ENCODE measurements at regions of chrX and their contacts with region 1.

Region 1: GRCh38 chrX:13087322-13088155 is 43.1 kb upstream of the FAM9C start:
- DNase-seq: peak; percentile 77
- ATAC-seq: peak; percentile 57
- H3K4me3 Mint-ChIP-seq: peak overlapping the region; percentile 80
- H3K27ac Mint-ChIP-seq: peak overlapping the region; percentile 96
- H3K4me1 Mint-ChIP-seq: peaks cover 76% of the 10 kb centered on the region
- H3K27me3 Mint-ChIP-seq: no peaks in the 10 kb centered on the region
- CTCF ChIP-seq: no peak

Region 2: DNA sequence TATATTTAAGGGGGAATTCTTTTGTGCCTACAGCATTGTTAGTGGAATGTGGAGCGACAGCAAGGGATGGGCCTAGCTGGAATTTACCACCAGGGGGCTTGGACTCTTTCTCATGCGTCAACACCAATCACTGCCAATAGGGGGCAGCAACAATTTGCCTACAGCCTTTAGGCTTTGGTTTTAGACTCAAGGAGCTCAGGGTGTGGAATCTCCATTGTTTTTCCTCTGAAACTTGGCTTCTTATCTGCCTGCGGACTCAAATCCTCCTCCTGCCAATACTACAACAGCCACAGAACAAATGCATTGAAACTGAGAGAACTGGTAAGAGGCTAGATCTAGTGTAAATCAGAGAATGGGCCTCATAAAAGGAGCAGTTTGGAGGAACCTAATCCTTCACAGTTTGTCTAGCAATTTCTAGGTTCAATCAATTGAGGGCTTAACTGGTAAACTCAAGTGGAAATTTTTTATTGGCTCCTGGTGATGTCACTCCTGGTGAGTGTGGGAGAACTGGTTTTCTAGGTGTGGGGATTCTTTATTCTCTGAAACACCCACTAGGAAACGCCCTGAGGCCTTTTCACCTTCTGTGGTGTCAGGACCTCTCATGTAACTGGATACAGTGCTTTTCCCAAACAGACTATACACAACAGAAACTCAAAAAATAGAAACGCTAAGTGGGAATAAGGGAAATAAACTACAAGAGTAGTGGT is 140.5 kb before region 1 on chrX:
- CTCF ChIA-PET with region 1: interaction called, 47 read pairs
- POLR2A ChIA-PET with region 1: interaction called, 12 read pairs
- intact Hi-C with region 1: loop called (anchors 2 kb)
- DNase-seq: peak; percentile 83
- ATAC-seq: peak; percentile 19
- H3K4me3 Mint-ChIP-seq: peak overlapping the region; percentile 65
- H3K27ac Mint-ChIP-seq: peak overlapping the region; percentile 95
- H3K4me1 Mint-ChIP-seq: peaks cover 47% of the 10 kb centered on the region
- H3K27me3 Mint-ChIP-seq: no peaks in the 10 kb centered on the region
- CTCF ChIP-seq: peak; percentile 87

Region 3: GRCh38 chrX:12974796-12975669 is 112.5 kb before region 1 on chrX and contains the start of gene TMSB4X:
- CTCF ChIA-PET with region 1: interaction called, 15 read pairs
- POLR2A ChIA-PET with region 1: interaction called, 333 read pairs
- intact Hi-C with region 1: loop called (anchors 2 kb)
- DNase-seq: peak; percentile 87
- ATAC-seq: peak; percentile 48
- H3K4me3 Mint-ChIP-seq: peak within 1 kb of the TSS; percentile 91
- H3K27ac Mint-ChIP-seq: peak within 1 kb of the TSS; percentile 95
- H3K4me1 Mint-ChIP-seq: peaks cover 15% of the 10 kb centered on the region
- H3K27me3 Mint-ChIP-seq: no peaks in the 10 kb centered on the region
- CTCF ChIP-seq: no peak
- total RNA-seq, gene TMSB4X: 5,169 to 5,393 TPM

Region 4: GRCh38 chrX:13000301-13000811 is 87.2 kb before region 1 on chrX:
- CTCF ChIA-PET with region 1: interaction called, 9 read pairs
- POLR2A ChIA-PET with region 1: interaction called, 20 read pairs
- intact Hi-C with region 1: no loop called
- DNase-seq: peak; percentile 67
- ATAC-seq: peak; percentile 46
- H3K4me3 Mint-ChIP-seq: peak overlapping the region; percentile 74
- H3K27ac Mint-ChIP-seq: peak overlapping the region; percentile 96
- H3K4me1 Mint-ChIP-seq: peaks cover 65% of the 10 kb centered on the region
- H3K27me3 Mint-ChIP-seq: no peaks in the 10 kb centered on the region
- CTCF ChIP-seq: no peak

Region 5: GRCh38 chrX:13051529-13052172 is 35.9 kb before region 1 on chrX:
- CTCF ChIA-PET with region 1: no interaction called
- POLR2A ChIA-PET with region 1: interaction called, 6 read pairs
- intact Hi-C with region 1: loop called (anchors 5 kb)
- DNase-seq: no peak
- ATAC-seq: peak; percentile 69
- H3K4me3 Mint-ChIP-seq: no peak overlapping the region
- H3K27ac Mint-ChIP-seq: peak overlapping the region; percentile 88
- H3K4me1 Mint-ChIP-seq: peaks cover 73% of the 10 kb centered on the region
- H3K27me3 Mint-ChIP-seq: no peaks in the 10 kb centered on the region
- CTCF ChIP-seq: no peak

Region 6: DNA sequence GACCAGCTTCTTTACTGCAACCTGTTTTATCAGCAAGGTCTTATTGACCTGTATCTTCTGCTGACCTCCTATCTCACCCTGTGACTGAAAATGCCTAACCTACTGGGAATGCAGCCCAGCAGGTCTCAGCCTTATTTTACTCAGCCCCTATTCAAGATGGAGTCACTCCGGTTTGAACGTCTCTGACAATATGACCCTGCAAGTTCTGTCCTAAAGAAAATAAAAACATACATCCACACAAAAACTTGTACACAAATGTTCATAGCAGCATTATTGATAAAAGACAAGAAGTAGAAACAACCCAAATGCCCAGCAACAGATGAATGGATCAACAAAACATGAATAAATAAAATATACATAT is 16.4 kb after region 1 on chrX:
- CTCF ChIA-PET with region 1: no interaction called
- POLR2A ChIA-PET with region 1: no interaction called
- intact Hi-C with region 1: no loop called
- DNase-seq: no peak
- ATAC-seq: no peak
- H3K4me3 Mint-ChIP-seq: no peak overlapping the region
- H3K27ac Mint-ChIP-seq: no peak overlapping the region
- H3K4me1 Mint-ChIP-seq: peaks cover 37% of the 10 kb centered on the region
- H3K27me3 Mint-ChIP-seq: no peaks in the 10 kb centered on the region
- CTCF ChIP-seq: no peak

Region 7: DNA sequence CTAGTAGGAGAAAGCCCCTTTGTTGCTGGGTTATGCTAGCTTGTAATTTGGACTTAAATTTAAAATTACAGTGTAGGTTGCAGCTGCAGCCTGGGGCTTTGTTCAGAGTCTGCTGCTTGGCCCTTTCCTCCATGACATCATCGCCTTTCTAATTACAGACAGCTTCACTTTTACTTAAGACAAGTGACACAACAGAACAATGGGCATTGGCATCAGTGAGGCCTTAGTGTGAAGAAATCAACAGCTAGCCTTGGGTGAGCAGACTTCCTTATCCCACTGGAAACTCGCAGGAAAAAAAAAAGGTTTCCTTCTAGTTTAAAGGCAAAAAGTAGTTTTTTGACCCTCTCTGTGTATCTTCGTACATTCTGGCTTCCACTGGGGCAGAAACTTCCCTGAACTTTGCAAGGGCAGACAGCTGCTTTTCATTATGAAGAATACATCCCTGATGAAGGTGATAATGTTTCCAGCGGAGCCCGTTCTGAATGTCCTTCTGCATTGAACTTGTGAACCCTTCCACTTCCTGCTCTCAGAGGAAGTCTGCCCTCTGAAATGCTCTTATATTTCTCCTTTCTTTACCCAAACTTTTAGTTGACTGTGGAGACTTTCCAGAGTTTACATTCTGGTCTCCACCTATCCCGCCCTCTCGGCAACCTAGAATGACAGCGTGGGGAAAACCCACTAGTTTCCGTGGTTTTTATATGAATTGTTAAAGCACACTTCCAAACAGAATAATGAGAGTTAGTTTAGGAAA is 80.1 kb after region 1 on chrX:
- CTCF ChIA-PET with region 1: no interaction called
- POLR2A ChIA-PET with region 1: no interaction called
- intact Hi-C with region 1: loop called (anchors 10 kb)
- DNase-seq: peak; percentile 20
- ATAC-seq: peak; percentile 65
- H3K4me3 Mint-ChIP-seq: peak overlapping the region; percentile 22
- H3K27ac Mint-ChIP-seq: peak overlapping the region; percentile 81
- H3K4me1 Mint-ChIP-seq: peaks cover 20% of the 10 kb centered on the region
- H3K27me3 Mint-ChIP-seq: no peaks in the 10 kb centered on the region
- CTCF ChIP-seq: no peak

Region 8: GRCh38 chrX:13487731-13488523 is 400.4 kb after region 1 on chrX:
- CTCF ChIA-PET with region 1: interaction called, 44 read pairs
- POLR2A ChIA-PET with region 1: interaction called, 3 read pairs
- intact Hi-C with region 1: loop called (anchors 2 kb)
- DNase-seq: peak; percentile 60
- ATAC-seq: peak; percentile 79
- H3K4me3 Mint-ChIP-seq: no peak overlapping the region
- H3K27ac Mint-ChIP-seq: peak overlapping the region; percentile 80
- H3K4me1 Mint-ChIP-seq: peaks cover 35% of the 10 kb centered on the region
- H3K27me3 Mint-ChIP-seq: no peaks in the 10 kb centered on the region
- CTCF ChIP-seq: peak; percentile 35

Measured in activated CD8-positive, alpha-beta T cell treated with anti-CD3 and anti-CD28 coated beads for 36 hours (primary cell).